SK-N-SH (cell line): ENCODE measurements at regions of chr4 and their contacts with region 1.

Region 1: DNA sequence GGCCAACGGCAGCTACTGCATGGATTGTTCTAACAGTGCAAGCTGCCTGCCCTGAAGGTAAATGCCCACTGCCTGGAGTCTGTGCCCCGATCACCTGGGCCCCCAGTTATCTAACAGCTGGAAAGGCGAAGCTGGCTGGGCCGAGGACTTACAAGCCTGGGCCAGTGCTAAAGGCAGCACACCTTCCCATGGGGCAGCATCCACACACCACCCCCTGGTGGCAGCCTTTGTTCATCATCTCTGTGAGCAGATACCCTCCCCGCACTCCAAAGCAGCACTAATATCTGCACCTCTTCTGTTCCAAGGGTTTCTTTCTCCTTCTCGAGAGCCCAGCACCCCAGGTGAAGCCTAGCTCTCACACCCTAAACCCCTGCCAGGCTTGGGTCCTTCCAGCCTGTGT is 7.6 kb downstream of the SLC2A9 start:
- DNase-seq: peak; percentile 47
- H3K4me3 ChIP-seq: no peak overlapping the region
- H3K27ac ChIP-seq: no peak overlapping the region
- H3K4me1 ChIP-seq: peaks cover 0 to 19% of the 10 kb centered on the region in 2 experiments; a peak in 2 of 4 replicates
- H3K27me3 ChIP-seq: no peaks in the 10 kb centered on the region
- CTCF ChIP-seq: no peak; the same call in 1 of the 2 replicates
- EP300 ChIP-seq: no peak
- RAD21 ChIP-seq: peak; percentile 48

Region 2: DNA sequence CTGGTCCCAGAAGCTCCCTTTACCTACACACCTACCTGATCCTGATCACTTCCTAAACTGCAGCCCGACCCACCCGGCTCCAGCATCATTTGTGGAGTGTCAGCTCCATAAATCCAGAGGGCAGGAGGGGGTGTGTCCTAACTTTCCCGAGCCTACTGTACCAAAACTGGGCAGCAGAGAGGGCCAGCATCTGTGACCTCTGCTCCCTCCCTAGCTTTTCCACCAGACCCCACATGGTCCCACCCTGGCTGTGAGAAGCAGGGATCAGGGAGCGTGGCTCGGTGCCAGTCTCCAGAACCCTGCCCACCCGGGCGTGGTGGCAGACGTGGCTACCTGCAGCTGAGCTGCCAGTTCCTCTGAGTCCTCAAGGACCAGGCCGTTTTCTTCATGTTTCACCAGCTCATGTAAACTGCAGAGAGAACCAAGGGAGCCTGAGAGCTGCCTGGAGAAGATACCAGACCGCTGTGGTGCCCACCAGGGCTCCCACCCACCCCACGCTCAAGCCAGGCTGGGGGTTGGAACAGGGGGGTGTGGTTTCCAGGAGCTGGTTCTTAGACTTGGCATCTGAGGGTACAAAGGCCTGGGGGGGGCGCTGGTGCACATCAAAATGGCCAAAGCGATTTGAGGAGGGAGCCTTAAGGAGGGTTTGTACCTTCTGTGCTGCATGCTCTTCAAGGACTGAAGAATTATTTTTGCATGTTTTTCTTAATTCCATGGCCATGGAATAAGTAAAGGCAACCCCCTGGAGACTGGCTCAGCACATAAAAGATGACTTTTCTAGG is 309.0 kb before region 1 on chr4:
- CTCF ChIA-PET with region 1: interaction called, 51 read pairs
- POLR2A ChIA-PET with region 1: no interaction called
- DNase-seq: no peak
- H3K4me3 ChIP-seq: no peak overlapping the region
- H3K27ac ChIP-seq: no peak overlapping the region
- H3K4me1 ChIP-seq: no peaks in the 10 kb centered on the region
- H3K27me3 ChIP-seq: no peaks in the 10 kb centered on the region
- CTCF ChIP-seq: no peak
- EP300 ChIP-seq: no peak
- RAD21 ChIP-seq: no peak

Region 3: DNA sequence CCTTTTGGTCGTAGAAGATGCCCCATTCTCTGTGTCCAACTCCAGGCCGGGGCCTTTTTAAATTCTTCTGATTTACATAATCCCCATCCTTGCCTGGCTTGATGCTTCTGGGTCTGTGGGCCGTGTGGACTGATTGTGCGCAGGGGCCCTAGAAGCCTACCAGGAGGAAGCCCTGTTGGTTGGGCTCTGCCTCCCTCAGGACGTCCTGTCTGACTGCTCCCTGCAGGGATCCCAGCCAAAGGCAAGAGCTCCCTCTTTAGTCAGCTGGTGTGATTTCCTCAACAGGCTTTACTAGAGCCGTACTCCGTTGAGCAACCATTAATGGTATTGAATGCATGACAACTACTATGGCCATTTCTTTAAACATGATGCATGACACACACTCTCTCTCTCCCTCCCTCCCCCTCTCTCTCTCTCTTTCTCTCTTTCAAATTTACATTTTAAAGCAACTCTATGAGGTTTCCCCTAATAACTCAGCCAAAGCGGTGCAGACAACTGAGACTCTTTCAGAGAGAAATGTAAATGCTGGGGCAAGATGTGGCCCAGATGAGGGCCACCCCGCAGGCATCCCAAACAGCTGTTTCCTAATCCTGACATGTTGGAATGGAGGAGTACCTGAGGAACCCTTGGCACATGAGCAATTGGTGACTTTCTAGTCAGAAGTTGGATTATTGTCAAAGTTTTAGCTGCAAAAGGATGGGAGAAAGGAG is 115.0 kb before region 1 on chr4:
- CTCF ChIA-PET with region 1: interaction called, 33 read pairs
- POLR2A ChIA-PET with region 1: no interaction called
- DNase-seq: peak; percentile 50
- H3K4me3 ChIP-seq: no peak overlapping the region
- H3K27ac ChIP-seq: no peak overlapping the region
- H3K4me1 ChIP-seq: no peaks in the 10 kb centered on the region; a peak in 1 of 4 replicates
- H3K27me3 ChIP-seq: no peaks in the 10 kb centered on the region
- CTCF ChIP-seq: no peak
- EP300 ChIP-seq: no peak
- RAD21 ChIP-seq: peak; percentile 63

Region 4: DNA sequence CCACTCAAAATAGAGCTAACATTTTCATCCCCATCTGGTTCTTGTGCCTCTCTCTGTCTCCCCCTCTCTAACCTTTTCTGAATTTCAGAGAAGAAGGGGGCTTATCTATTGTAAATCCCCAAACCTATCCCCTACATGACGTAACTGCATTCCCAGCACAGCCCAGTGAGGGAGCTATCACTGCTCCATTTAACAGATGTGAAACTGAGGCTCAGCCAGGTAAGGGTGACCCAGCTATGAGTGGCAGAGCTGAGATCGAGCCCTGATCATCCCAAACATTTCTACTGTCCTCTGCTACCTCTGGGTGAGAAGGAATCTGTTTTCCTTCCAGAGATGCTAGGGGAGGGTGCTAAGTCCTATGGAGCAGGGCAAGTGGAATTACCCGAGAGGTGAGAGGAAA is 99.9 kb before region 1 on chr4:
- CTCF ChIA-PET with region 1: interaction called, 12 read pairs
- POLR2A ChIA-PET with region 1: no interaction called
- DNase-seq: no peak
- H3K4me3 ChIP-seq: no peak overlapping the region
- H3K27ac ChIP-seq: no peak overlapping the region
- H3K4me1 ChIP-seq: no peaks in the 10 kb centered on the region
- H3K27me3 ChIP-seq: no peaks in the 10 kb centered on the region
- CTCF ChIP-seq: no peak
- EP300 ChIP-seq: no peak
- RAD21 ChIP-seq: no peak

Region 5: DNA sequence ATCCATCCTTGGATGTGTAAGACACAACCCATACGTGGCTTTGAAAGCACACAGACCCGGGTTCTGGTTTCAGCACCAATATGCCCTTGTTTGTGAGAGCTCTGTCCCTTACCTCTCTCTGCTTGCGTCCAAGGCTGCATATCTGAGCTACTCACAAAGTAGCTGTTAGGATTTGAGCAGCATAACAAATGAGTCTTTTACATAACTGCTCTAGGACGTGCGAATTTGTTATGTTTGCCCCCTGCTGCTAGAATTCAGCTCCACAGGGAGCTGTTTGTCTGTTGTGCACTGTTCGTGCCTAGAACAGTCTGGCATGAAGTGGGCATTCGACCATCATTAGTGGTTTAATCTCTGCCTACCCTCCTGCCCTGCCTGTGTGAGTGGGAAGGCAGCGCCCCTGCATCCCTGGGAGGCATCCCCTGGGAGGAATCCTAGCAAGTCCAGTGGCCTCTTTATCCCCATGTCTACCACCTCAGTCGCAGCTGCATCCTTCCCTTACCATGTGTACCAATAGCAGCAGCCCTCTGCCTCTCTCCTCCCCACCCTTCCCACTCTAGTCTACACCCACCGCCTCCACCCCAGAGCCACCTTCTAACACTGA is 34.5 kb before region 1 on chr4:
- CTCF ChIA-PET with region 1: interaction called, 14 read pairs
- POLR2A ChIA-PET with region 1: interaction called, 3 read pairs
- DNase-seq: peak; percentile 17
- H3K4me3 ChIP-seq: no peak overlapping the region
- H3K27ac ChIP-seq: no peak overlapping the region
- H3K4me1 ChIP-seq: peaks cover 0 to 9% of the 10 kb centered on the region in 2 experiments; a peak in 1 of 4 replicates
- H3K27me3 ChIP-seq: no peaks in the 10 kb centered on the region
- CTCF ChIP-seq: no peak
- EP300 ChIP-seq: no peak
- RAD21 ChIP-seq: no peak

Region 6: DNA sequence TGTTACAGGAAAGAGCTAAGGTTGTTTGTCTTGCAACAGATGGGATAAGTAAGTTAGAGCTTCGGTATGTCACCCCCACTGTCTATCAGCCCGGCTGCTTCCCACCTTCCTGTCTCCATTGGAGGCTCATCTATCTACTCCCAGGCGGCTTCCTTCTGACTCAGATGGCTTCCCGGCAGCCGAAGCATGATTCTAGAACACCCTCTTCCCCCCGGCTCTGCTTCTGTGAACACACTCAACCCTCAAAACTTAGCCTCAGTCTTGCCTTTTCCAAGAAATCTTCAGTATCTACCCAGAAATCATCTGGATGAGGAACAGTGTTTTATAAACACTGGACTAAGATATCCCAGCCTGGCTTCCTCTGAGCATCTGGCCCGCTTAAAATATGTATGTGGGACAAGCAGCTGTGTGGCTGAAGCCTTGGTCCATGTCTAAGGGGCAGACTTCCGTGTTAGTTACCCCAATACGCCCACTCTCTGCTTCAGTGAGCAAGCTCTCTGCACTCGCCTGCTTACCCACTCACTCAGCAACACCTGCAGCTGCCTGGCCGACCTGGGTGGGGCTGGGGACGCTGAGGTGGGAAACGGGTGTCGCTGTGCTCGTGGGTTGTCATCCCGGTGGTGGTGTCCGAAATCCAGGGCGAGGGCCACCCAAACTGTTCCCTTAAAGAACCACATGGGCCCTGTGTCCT is 19.6 kb after region 1 on chr4:
- CTCF ChIA-PET with region 1: interaction called, 47 read pairs
- POLR2A ChIA-PET with region 1: no interaction called
- DNase-seq: no peak
- H3K4me3 ChIP-seq: no peak overlapping the region
- H3K27ac ChIP-seq: no peak overlapping the region
- H3K4me1 ChIP-seq: peaks cover 0 to 11% of the 10 kb centered on the region in 2 experiments; a peak in 1 of 4 replicates
- H3K27me3 ChIP-seq: no peaks in the 10 kb centered on the region
- CTCF ChIP-seq: no peak
- EP300 ChIP-seq: no peak
- RAD21 ChIP-seq: no peak

Region 7: GRCh38 chr4:10063544-10064300 is 50.0 kb after region 1 on chr4:
- CTCF ChIA-PET with region 1: interaction called, 24 read pairs
- POLR2A ChIA-PET with region 1: no interaction called
- DNase-seq: no peak
- H3K4me3 ChIP-seq: no peak overlapping the region; a peak in 1 of 4 replicates
- H3K27ac ChIP-seq: no peak overlapping the region
- H3K4me1 ChIP-seq: peaks cover 0 to 7% of the 10 kb centered on the region in 2 experiments; a peak in 1 of 4 replicates
- H3K27me3 ChIP-seq: no peaks in the 10 kb centered on the region
- CTCF ChIP-seq: peak; percentile 21; the same call in 1 of the 2 replicates
- EP300 ChIP-seq: no peak
- RAD21 ChIP-seq: peak; percentile 69